ENCODE measurements at regions of chr3 and their contacts with region 1.

Region 1: DNA sequence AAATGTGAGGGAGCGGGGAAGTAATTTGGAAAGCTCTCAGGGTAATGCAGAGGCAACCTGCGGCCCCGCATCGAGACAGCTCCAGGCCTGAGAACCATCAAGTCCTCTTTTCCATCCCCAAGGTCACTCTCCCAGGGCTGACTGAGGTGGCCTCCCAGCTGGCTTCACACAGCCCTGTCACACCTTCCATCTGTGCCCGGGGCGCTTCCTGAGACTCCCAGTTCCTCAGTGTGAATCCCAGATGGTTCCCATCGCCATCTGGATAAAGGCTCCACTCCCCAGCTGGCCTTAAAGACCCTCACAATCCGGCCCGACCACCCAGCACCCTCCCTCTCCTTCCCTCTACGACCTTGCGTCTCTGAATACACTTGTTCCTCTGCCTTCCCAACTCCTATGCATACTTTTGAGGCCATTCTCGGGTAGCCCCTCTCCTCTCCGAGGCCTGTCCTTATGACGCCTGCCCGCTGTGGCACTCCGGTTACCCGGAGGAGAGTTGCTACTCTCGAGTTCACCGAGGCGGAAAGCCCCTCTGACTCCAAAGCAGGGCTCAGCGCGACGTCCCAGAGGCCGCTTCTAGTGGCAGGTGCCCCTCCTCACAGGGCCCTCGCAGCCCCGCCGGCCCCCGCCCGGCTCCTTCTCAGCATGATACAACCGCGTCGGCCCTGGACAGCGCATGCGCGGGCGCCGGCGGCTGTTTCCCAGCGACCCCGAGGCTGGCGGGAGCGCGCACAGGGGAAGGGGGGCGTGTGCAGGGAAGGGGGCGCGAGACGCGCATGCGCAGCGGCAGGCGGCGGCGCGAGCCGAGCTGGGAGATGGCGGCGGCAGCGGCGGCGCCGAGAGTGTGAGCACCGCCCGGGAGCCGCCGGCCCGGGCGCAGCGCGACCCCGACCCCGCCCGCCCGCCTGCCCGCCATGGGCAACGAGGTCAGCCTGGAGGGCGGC is at the start of gene BSN:
- DNase-seq: peak; percentile 92
- H3K4me3 ChIP-seq: peak within 1 kb of the TSS; percentile 39 to 65 (median 51)
- H3K27ac ChIP-seq: no peak within 1 kb of the TSS
- H3K4me1 ChIP-seq: peaks cover 6% of the 10 kb centered on the region
- H3K27me3 ChIP-seq: peaks cover 14 to 18% of the 10 kb centered on the region in 2 experiments
- CTCF ChIP-seq: no peak
- POLR2A ChIP-seq: no peak
- total RNA-seq, gene BSN: 0.27 and 0.28 TPM in 2 replicates

Region 2: GRCh38 chr3:49593041-49593440 is 39.1 kb after region 1 on chr3:
- CTCF ChIA-PET with region 1: no interaction called
- POLR2A ChIA-PET with region 1: no interaction called
- dilution Hi-C with region 1: no loop called
- intact Hi-C with region 1: loop called (anchors 1 kb)
- DNase-seq: no peak
- H3K4me3 ChIP-seq: no peak overlapping the region
- H3K27ac ChIP-seq: no peak overlapping the region
- H3K4me1 ChIP-seq: no peaks in the 10 kb centered on the region
- H3K27me3 ChIP-seq: no peaks in the 10 kb centered on the region
- CTCF ChIP-seq: no peak
- POLR2A ChIP-seq: no peak

Region 3: GRCh38 chr3:49638445-49638844 is 84.5 kb after region 1 on chr3:
- CTCF ChIA-PET with region 1: no interaction called
- POLR2A ChIA-PET with region 1: no interaction called
- dilution Hi-C with region 1: no loop called
- intact Hi-C with region 1: no loop called
- DNase-seq: no peak
- H3K4me3 ChIP-seq: no peak overlapping the region
- H3K27ac ChIP-seq: no peak overlapping the region
- H3K4me1 ChIP-seq: no peaks in the 10 kb centered on the region
- H3K27me3 ChIP-seq: peaks cover 0 to 2% of the 10 kb centered on the region in 2 experiments
- CTCF ChIP-seq: no peak
- POLR2A ChIP-seq: no peak

Region 4: DNA sequence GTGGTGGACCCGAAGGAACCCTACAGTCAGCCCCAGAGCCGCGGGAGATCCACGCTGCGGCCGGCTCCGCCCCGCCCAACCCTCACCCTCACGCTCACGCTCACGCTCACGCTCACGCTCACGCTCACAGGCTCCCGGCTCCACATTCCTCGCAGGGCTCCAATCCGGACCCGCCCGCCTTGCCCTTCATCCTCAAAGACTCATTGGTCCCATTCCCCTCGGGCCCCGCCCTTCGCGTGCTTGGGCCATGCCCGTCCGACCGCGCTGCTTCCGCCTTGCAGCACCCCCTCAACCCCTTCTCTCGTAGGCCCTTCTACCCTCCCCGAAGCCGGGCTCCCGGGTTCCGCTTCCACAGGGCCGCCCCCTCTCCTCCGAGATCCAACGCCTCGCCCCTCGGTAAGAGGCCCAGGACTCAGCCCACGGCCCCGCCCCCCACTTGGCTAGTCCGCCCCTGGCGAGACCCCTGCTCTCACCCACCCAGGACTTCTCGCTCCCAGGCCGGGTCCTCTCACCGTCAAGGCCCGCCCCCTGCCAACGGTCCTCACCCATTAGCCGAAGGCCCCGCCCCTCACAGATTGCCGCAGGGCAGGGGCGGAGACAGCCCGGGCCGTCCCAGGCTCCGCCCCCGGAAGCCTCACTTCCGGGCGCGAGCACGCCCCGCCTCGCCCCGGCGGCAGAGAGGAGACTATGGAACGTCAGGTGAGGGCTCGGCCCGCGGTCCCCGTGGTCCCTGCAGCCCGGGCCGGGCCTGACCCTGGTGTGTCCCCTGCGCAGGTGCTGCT is 119.9 kb after region 1 on chr3 and contains the start of gene APEH:
- CTCF ChIA-PET with region 1: interaction called, 14 read pairs
- POLR2A ChIA-PET with region 1: no interaction called
- dilution Hi-C with region 1: no loop called
- intact Hi-C with region 1: no loop called
- DNase-seq: peak; percentile 95
- H3K4me3 ChIP-seq: peak within 1 kb of the TSS; percentile 41 to 47 (median 44)
- H3K27ac ChIP-seq: peak within 1 kb of the TSS; percentile 40
- H3K4me1 ChIP-seq: peaks cover 4% of the 10 kb centered on the region
- H3K27me3 ChIP-seq: no peaks in the 10 kb centered on the region
- CTCF ChIP-seq: no peak
- POLR2A ChIP-seq: peak; percentile 84
- total RNA-seq, gene APEH: 68.2 and 77.9 TPM in 2 replicates

Region 5: DNA sequence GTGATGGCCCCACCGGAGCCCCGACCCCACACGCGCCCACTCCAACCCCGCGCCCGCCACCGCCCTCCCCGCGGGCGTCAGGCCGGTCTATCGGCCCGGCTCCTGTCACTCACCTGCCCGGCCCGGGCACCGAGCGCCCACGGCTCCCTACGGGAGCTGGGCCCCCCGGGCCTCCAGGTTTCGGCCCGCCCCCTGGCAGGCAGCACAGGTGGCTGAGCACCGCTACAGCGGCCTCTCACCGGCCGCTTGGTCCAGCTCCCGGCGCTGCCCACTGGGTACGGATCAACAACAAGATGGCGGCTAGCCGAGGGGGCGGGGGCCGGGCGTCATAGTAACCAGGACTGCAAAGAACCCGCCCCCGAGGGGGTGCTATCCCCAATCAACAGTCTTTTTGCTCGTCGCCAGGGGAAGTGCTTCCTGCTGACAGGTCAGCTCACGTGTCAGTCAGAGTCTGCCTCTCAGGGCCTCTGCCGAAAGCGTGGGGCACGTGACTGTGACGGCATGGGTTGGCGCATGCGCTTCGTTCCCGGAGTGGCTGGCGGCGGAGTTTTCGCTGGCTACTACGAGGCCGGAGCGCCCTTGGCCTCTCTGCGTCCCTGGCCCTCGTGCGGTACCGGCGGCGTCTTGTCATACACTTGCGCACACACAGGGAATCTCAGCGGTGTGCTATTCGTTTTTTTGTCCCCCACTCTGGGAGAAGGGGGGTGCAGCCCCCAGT is 232.4 kb after region 1 on chr3 and contains the start of gene IP6K1:
- CTCF ChIA-PET with region 1: no interaction called
- POLR2A ChIA-PET with region 1: no interaction called
- dilution Hi-C with region 1: no loop called
- intact Hi-C with region 1: loop called (anchors 5 kb)
- DNase-seq: peak; percentile 100
- H3K4me3 ChIP-seq: peak within 1 kb of the TSS; percentile 74 to 85 (median 80)
- H3K27ac ChIP-seq: peak within 1 kb of the TSS; percentile 38
- H3K4me1 ChIP-seq: peaks cover 11% of the 10 kb centered on the region
- H3K27me3 ChIP-seq: no peaks in the 10 kb centered on the region
- CTCF ChIP-seq: no peak
- POLR2A ChIP-seq: peak; percentile 82
- total RNA-seq, gene IP6K1: 54.6 and 60.8 TPM in 2 replicates

Measured in endothelial cell of umbilical vein (primary cell).